ENCODE measurements at regions of chr10 and their contacts with region 1.

Region 1: DNA sequence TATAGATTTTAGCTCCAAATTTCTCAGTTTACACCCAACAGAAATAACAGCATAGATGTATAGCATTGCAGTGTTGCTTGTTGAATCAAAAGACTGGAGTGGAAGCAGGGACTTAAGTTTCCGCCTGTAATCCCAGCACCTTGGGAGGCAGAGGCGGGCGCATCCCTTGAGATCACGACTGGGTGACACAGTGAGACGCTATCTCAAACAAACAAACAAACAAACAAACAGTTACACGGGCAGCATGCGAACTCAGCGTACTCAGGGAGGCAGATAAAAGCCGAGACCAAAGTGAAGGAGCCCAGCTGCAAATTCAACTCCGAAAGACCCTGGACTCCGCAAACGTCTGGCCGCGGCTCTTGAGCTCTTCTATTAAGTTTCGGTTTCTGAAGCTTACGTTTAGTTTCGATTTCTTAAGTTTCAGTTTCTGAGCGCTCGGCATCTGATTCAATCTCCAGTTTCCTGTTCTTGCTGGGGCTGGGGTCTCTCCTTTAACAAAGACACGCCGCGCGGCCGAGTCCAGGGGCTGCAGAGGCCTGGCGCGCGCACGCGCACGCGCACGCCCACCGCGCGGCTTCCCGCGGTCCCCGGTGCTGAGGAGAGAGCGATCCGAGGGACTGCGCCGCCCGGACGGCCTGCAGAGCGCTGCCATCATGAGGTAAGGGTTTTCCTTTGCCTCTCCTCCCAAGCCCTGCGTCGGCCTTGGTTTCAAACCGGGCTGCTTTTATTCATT is at the start of gene IFIT5:
- DNase-seq: peak; percentile 77

Region 2: GRCh38 chr10:89183571-89183970 is 230.7 kb before region 1 on chr10:
- in situ Hi-C with region 1: no loop called
- DNase-seq: no peak

Region 3: DNA sequence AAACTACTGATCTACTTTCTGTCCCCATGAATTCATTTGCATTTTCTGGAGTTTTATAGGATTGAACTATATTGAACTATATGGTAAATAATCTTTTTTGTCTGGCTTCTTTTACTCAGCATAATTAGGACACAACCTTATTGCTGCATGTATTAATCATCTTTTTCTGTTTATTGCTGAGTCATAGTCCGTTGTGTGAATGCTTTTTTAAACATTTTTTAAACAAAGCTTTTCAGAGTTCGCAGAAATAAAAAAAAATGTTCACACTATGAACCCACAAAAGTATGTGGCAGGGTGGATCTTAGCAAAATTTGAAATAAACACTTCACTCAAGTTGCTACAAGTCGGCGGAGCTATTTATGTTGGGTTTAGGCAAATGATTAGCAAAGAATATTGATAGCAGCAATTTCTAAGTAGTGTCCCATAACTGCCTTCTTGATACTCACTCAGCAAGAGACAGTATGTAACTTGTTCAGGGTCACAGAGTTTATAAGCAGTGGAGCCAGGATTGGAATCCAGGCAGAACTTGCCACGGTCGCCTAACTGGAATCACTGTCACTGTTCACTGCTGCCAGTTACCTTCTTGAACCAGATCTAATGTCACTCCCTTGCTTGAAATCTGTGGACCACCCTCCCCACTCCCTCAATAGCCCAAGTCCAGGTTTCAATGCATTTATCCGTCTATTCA is 212.8 kb before region 1 on chr10:
- in situ Hi-C with region 1: no loop called
- DNase-seq: no peak

Region 4: DNA sequence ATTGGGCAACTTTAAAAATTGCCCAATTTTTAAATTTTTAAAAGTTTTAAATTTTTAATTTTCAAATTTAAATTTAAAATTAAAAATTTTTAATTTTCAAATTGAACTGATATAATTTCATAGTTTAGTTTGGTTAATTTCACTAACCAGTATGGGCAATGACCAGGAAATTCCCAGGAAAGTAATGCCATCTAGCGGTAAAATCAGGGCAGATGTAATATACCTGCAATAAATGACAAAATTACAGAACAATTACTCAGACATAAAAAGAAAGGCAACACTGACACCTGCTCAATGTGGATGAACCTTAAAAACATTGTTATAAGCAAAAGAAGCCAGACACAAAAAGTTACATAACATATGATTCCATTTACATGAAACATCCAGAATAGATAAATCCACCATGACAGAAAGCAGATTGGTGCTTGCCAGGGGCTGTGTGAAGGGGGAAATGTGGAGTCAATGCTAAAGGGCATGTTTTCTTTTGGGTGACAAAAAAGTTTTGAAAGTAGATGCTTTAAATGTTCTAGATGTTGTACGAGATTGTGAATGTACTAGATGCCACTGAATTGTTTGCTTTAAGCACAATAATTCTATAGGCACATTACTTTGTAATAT is 149.7 kb after region 1 on chr10:
- in situ Hi-C with region 1: loop called (anchors 25 kb)
- DNase-seq: peak; percentile 64

Measured in ACHN (cell line).